Activated CD4-positive, alpha-beta memory T cell treated with anti-CD3 and anti-CD28 coated beads, Interleukin-2, amount 10 ng/mL, durations not matched to agents 7 days and 5 days (primary cell): ENCODE measurements at regions of chr10 and their contacts with region 1.

Region 1: GRCh38 chr10:49500418-49500817 is 38.5 kb downstream of the ERCC6 start:
- DNase-seq: no peak
- H3K4me3 Mint-ChIP-seq: no peak overlapping the region
- H3K27ac Mint-ChIP-seq: no peak overlapping the region
- H3K4me1 Mint-ChIP-seq: peaks cover 17% of the 10 kb centered on the region
- H3K27me3 Mint-ChIP-seq: no peaks in the 10 kb centered on the region

Region 2: GRCh38 chr10:49512121-49512809 is 11.8 kb after region 1 on chr10:
- CTCF ChIA-PET with region 1: interaction called, 14 read pairs
- POLR2A ChIA-PET with region 1: no interaction called
- DNase-seq: no peak
- H3K4me3 Mint-ChIP-seq: no peak overlapping the region
- H3K27ac Mint-ChIP-seq: no peak overlapping the region
- H3K4me1 Mint-ChIP-seq: peaks cover 17% of the 10 kb centered on the region
- H3K27me3 Mint-ChIP-seq: no peaks in the 10 kb centered on the region

Region 3: GRCh38 chr10:49569031-49569765 is 68.8 kb after region 1 on chr10:
- CTCF ChIA-PET with region 1: no interaction called
- POLR2A ChIA-PET with region 1: no interaction called
- DNase-seq: no peak
- H3K4me3 Mint-ChIP-seq: no peak overlapping the region
- H3K27ac Mint-ChIP-seq: no peak overlapping the region
- H3K4me1 Mint-ChIP-seq: peaks cover 16% of the 10 kb centered on the region
- H3K27me3 Mint-ChIP-seq: peaks cover 35% of the 10 kb centered on the region